IMR-90 (cell line): ENCODE measurements at regions of chr10 and their contacts with region 1.

Region 1: DNA sequence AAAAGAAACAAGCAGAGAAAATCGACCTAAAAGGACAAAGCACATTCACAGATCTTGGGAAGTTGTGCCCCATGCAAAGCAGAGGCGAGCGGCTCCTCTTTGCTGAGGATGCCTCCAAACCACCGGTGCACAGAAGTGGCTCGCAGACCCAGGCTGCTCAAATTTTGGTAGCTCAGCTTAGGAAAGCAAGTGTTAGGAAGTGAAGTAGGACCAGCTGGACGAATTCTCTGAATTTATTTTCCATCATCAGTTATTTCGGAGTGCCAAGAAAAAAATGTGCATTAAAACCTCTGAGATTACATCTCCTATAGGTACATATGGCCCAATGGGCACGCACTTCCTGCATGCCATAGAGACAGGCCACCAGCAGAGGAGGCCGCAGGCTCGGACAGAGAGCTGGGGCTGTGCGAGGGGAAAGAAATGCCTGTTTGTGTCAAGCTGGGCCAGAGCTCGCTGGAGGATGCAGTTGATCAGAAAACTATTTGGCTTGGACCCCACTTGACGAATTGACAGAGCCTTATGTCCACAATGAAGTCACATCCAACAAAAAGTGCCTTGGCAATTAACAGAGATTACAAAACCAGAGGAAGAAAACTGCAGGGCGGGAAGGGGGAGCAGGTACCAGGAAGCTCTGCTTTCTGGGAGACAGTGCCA is 122.3 kb upstream of the LYZL2 start:
- DNase-seq: peak; percentile 75
- ATAC-seq: peak; percentile 92
- H3K4me3 ChIP-seq: no peak overlapping the region
- H3K27ac ChIP-seq: peak overlapping the region; percentile 2; the same call in 1 of the 2 replicates
- H3K4me1 ChIP-seq: peaks cover 16% of the 10 kb centered on the region
- H3K27me3 ChIP-seq: no peaks in the 10 kb centered on the region
- CTCF ChIP-seq: peak; percentile 98
- POLR2A ChIP-seq: peak; percentile 55
- RAD21 ChIP-seq: peak; percentile 100

Region 2: GRCh38 chr10:31133628-31134302 is 382.0 kb after region 1 on chr10:
- CTCF ChIA-PET with region 1: interaction called, 3 read pairs
- POLR2A ChIA-PET with region 1: interaction called, 3 read pairs
- dilution Hi-C with region 1: no loop called
- in situ Hi-C with region 1: no loop called
- intact Hi-C with region 1: loop called (anchors 10 kb)
- DNase-seq: peak; percentile 65
- ATAC-seq: peak; percentile 48
- H3K4me3 ChIP-seq: no peak overlapping the region
- H3K27ac ChIP-seq: peak overlapping the region; percentile 100
- H3K4me1 ChIP-seq: peaks cover 24% of the 10 kb centered on the region
- H3K27me3 ChIP-seq: no peaks in the 10 kb centered on the region
- CTCF ChIP-seq: no peak
- POLR2A ChIP-seq: 0 out of 2 replicates have a peak, but pooled peaks have one; percentile 10
- RAD21 ChIP-seq: no peak

Region 3: GRCh38 chr10:31261511-31262311 is 509.9 kb after region 1 on chr10:
- CTCF ChIA-PET with region 1: interaction called, 5 read pairs
- POLR2A ChIA-PET with region 1: no interaction called
- dilution Hi-C with region 1: no loop called
- in situ Hi-C with region 1: no loop called
- intact Hi-C with region 1: loop called (anchors 10 kb)
- DNase-seq: peak; percentile 94
- ATAC-seq: peak; percentile 83
- H3K4me3 ChIP-seq: no peak overlapping the region; the same call in 1 of the 2 replicates
- H3K27ac ChIP-seq: peak overlapping the region; percentile 88
- H3K4me1 ChIP-seq: peaks cover 21% of the 10 kb centered on the region
- H3K27me3 ChIP-seq: no peaks in the 10 kb centered on the region
- CTCF ChIP-seq: no peak
- POLR2A ChIP-seq: no peak
- RAD21 ChIP-seq: no peak; the same call in 1 of the 2 replicates

Region 4: GRCh38 chr10:31490858-31491504 is 739.2 kb after region 1 on chr10:
- CTCF ChIA-PET with region 1: interaction called, 3 read pairs
- POLR2A ChIA-PET with region 1: no interaction called
- dilution Hi-C with region 1: no loop called
- in situ Hi-C with region 1: no loop called
- intact Hi-C with region 1: loop called (anchors 10 kb)
- DNase-seq: peak; percentile 52
- ATAC-seq: peak; percentile 70
- H3K4me3 ChIP-seq: no peak overlapping the region
- H3K27ac ChIP-seq: no peak overlapping the region
- H3K4me1 ChIP-seq: peaks cover 5% of the 10 kb centered on the region
- H3K27me3 ChIP-seq: no peaks in the 10 kb centered on the region
- CTCF ChIP-seq: peak; percentile 62
- POLR2A ChIP-seq: no peak
- RAD21 ChIP-seq: peak; percentile 73